ENCODE measurements at regions of chr2 and their contacts with region 1.

Region 1: DNA sequence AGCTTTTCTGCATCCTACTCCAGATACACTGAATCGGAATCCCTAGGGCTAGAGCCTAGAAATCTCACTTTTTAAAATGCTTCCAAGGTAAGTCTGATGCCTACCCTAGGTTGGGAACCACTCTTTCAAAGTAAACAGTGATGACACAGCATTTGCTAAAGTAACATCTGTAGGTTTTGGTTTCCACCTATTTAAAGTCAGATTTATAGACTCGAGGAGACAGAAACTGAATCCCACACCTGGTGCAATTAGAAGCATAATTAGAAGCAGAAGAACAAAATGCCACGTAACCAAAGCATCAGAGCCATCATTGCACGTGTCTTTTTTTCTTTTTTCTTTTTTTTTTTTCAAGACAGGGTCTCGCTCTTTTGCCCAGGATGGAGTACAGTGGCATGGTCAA is 40.9 kb downstream of the PDK1 start:
- DNase-seq: no peak
- ATAC-seq: no peak
- H3K4me3 ChIP-seq: no peak overlapping the region
- H3K27ac ChIP-seq: no peak overlapping the region
- H3K4me1 ChIP-seq: peaks cover 7% of the 10 kb centered on the region
- H3K27me3 ChIP-seq: no peaks in the 10 kb centered on the region
- CTCF ChIP-seq: no peak

Region 2: DNA sequence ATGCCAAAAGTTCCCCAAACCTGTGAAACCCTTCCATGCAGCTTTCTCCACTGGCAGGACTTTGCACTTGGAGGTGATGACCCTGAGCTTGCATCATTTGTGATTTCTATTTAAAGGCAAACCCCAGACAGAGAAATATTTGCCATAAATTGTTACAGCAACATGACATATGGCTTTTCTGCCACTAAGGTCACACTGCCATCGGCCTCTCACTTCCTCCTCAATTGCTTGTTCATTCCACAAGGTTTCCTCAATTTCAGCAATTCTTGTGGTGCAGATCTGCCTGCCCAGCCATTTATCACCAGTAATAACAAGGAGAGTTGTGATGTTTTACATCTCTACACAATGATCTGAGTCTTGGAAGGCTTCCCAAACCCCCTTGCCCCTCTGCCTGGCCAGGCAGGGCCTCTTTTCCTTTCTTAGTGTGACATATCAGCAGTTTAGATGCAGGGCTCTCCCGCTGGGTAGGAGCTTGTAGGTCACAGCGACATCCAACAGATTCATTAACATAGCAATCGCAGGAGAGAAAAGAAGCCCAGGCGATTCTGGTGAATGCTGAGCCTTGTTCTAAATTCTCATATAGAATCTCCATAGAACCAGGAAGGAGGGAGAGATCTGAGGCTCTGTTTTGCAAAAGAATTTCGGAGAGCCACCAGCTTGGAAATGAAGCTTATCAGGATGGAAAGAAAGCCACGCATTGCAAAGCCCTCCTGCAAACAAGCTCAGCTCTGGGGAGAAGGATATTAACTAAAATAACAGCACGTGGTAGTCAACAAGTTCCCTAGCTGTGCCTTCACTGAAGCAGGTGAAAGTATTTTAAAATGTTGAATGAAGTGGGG is 216.1 kb before region 1 on chr2:
- intact Hi-C with region 1: no loop called
- DNase-seq: no peak
- ATAC-seq: no peak
- H3K4me3 ChIP-seq: no peak overlapping the region
- H3K27ac ChIP-seq: no peak overlapping the region
- H3K4me1 ChIP-seq: peaks cover 3% of the 10 kb centered on the region
- H3K27me3 ChIP-seq: no peaks in the 10 kb centered on the region
- CTCF ChIP-seq: no peak

Region 3: GRCh38 chr2:172674034-172674967 is 77.5 kb after region 1 on chr2:
- intact Hi-C with region 1: loop called in 1 of 2 experiments (anchors 5 kb)
- DNase-seq: peak; percentile 25 to 66
- ATAC-seq: peak; percentile 65 to 87 (median 76)
- H3K4me3 ChIP-seq: peak overlapping the region; percentile 37
- H3K27ac ChIP-seq: no peak overlapping the region
- H3K4me1 ChIP-seq: no peaks in the 10 kb centered on the region
- H3K27me3 ChIP-seq: no peaks in the 10 kb centered on the region
- CTCF ChIP-seq: peak; percentile 67

Region 4: GRCh38 chr2:172710584-172711024 is 113.8 kb after region 1 on chr2:
- intact Hi-C with region 1: loop called (anchors 5 to 10 kb)
- DNase-seq: no peak
- ATAC-seq: peak in 1 of 4 donors; percentile 39
- H3K4me3 ChIP-seq: no peak overlapping the region
- H3K27ac ChIP-seq: no peak overlapping the region
- H3K4me1 ChIP-seq: no peaks in the 10 kb centered on the region
- H3K27me3 ChIP-seq: no peaks in the 10 kb centered on the region
- CTCF ChIP-seq: peak; percentile 49